ENCODE measurements at regions of chr1 and their contacts with region 1.

Region 1: GRCh38 chr1:219173758-219174588 is at the start of gene LYPLAL1:
- DNase-seq: peak; percentile 81
- H3K4me3 ChIP-seq: peak within 1 kb of the TSS; percentile 35 to 69
- H3K27ac ChIP-seq: peak within 1 kb of the TSS; percentile 69 to 94
- H3K4me1 ChIP-seq: peaks cover 10% of the 10 kb centered on the region
- H3K27me3 ChIP-seq: no peaks in the 10 kb centered on the region
- CTCF ChIP-seq: no peak
- POLR2A ChIP-seq: peak; percentile 84
- total RNA-seq, gene LYPLAL1: 15.8 to 29.3 TPM

Region 2: DNA sequence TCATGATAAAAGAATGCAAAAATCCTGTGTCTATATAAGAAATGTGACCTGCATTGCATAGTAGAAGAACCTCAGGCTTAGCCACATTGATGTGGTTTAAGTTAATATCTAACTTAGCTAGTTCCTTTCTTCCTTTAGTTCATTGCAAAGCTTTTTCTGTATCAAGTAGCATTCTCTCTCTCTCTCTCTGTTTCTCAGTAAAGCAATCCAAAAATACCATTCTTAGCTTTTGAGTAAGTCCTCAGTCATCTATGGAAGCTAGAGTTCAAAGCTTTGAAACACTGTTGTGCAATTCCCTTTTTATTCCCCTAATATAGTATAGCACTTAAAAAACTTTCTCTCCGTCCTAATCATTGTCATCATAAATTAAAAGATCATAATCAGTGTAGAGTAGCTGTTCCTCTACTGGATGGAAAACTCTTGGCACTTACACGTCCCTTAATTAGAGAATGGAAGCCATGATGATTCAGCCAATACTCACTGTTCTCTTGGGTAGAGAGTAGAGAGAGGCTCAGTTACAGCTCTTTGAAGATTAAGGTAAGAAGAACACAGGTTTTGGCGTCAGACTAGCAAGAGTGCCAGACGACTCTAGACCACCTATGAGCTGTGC is 350.6 kb before region 1 on chr1:
- intact Hi-C with region 1: loop called (anchors 10 kb)
- DNase-seq: no peak
- H3K4me3 ChIP-seq: no peak overlapping the region
- H3K27ac ChIP-seq: no peak overlapping the region
- H3K4me1 ChIP-seq: no peaks in the 10 kb centered on the region
- H3K27me3 ChIP-seq: no peaks in the 10 kb centered on the region
- CTCF ChIP-seq: no peak
- POLR2A ChIP-seq: no peak

Region 3: GRCh38 chr1:219298571-219299148 is 124.7 kb after region 1 on chr1:
- intact Hi-C with region 1: loop called (anchors 5 kb)
- DNase-seq: no peak
- H3K4me3 ChIP-seq: no peak overlapping the region
- H3K27ac ChIP-seq: peak overlapping the region; percentile 53 to 56
- H3K4me1 ChIP-seq: no peaks in the 10 kb centered on the region
- H3K27me3 ChIP-seq: no peaks in the 10 kb centered on the region
- CTCF ChIP-seq: no peak
- POLR2A ChIP-seq: no peak

Region 4: DNA sequence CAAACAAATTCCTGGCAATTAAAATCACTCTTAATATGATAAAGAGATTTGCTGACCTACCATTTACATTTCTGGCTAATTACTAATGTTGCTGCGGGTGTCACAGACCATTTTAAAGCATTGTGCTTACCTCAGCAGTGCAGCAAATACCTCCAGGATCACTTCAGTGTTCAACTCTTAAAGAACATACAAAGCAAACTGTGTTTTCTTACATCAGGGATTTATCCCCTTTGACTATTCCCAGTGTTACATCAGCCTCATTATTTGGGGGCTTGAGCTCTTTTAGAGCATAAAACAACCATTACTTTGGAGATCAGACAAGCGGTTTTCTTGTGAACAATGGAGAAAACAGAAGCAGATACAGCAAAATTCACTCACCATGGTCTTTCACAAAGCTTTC is 185.2 kb after region 1 on chr1:
- intact Hi-C with region 1: no loop called
- DNase-seq: no peak
- H3K4me3 ChIP-seq: no peak overlapping the region
- H3K27ac ChIP-seq: no peak overlapping the region
- H3K4me1 ChIP-seq: no peaks in the 10 kb centered on the region
- H3K27me3 ChIP-seq: no peaks in the 10 kb centered on the region
- CTCF ChIP-seq: no peak
- POLR2A ChIP-seq: no peak

Region 5: GRCh38 chr1:219544163-219544846 is 370.3 kb after region 1 on chr1:
- intact Hi-C with region 1: loop called (anchors 10 kb)
- DNase-seq: no peak
- H3K4me3 ChIP-seq: no peak overlapping the region
- H3K27ac ChIP-seq: no peak overlapping the region
- H3K4me1 ChIP-seq: no peaks in the 10 kb centered on the region
- H3K27me3 ChIP-seq: no peaks in the 10 kb centered on the region
- CTCF ChIP-seq: peak in 2 of 4 experiments; percentile 9 to 22
- POLR2A ChIP-seq: no peak

Measured in prostate gland (tissue), 2 donors.